A549 (cell line): ENCODE measurements at regions of chr15 and their contacts with region 1.

Region 1: GRCh38 chr15:59247364-59247763 is 40.7 kb downstream of the LDHAL6B start:
- DNase-seq: peak; percentile 73 to 86
- ATAC-seq: peak; percentile 75 to 88; a peak in 5 of 6 replicates
- H3K4me3 ChIP-seq: no peak overlapping the region
- H3K27ac ChIP-seq: peak overlapping the region; percentile 53 to 87
- H3K4me1 ChIP-seq: peaks cover 93% of the 10 kb centered on the region
- CTCF ChIP-seq: peak; percentile 79
- EP300 ChIP-seq: no peak
- POLR2A ChIP-seq: no peak
- RAD21 ChIP-seq: peak; percentile 79 to 81

Region 2: GRCh38 chr15:58839485-58839884 is 407.9 kb before region 1 on chr15:
- CTCF ChIA-PET with region 1: no interaction called
- POLR2A ChIA-PET with region 1: no interaction called
- DNase-seq: peak; percentile 31 to 33
- ATAC-seq: peak; percentile 59 to 87; a peak in 3 of 6 replicates
- H3K4me3 ChIP-seq: no peak overlapping the region
- H3K27ac ChIP-seq: no peak overlapping the region
- H3K4me1 ChIP-seq: no peaks in the 10 kb centered on the region
- CTCF ChIP-seq: peak; percentile 43
- EP300 ChIP-seq: no peak
- POLR2A ChIP-seq: no peak
- RAD21 ChIP-seq: peak; percentile 43 to 59; a peak in 4 of 5 replicates

Region 3: GRCh38 chr15:59237119-59237855 is 10.1 kb before region 1 on chr15:
- CTCF ChIA-PET with region 1: interaction called, 20 read pairs
- POLR2A ChIA-PET with region 1: no interaction called
- DNase-seq: no peak
- ATAC-seq: no peak
- H3K4me3 ChIP-seq: no peak overlapping the region
- H3K27ac ChIP-seq: peak overlapping the region; percentile 5 to 46; a peak in 3 of 6 replicates
- H3K4me1 ChIP-seq: peaks cover 55% of the 10 kb centered on the region
- CTCF ChIP-seq: no peak
- EP300 ChIP-seq: no peak
- POLR2A ChIP-seq: no peak
- RAD21 ChIP-seq: no peak

Region 4: GRCh38 chr15:59290295-59291212 is 43.2 kb after region 1 on chr15:
- CTCF ChIA-PET with region 1: interaction called, 37 read pairs
- POLR2A ChIA-PET with region 1: no interaction called
- DNase-seq: no peak
- ATAC-seq: no peak
- H3K4me3 ChIP-seq: no peak overlapping the region
- H3K27ac ChIP-seq: peak overlapping the region; percentile 93 to 95
- H3K4me1 ChIP-seq: peaks cover 89% of the 10 kb centered on the region
- CTCF ChIP-seq: no peak
- EP300 ChIP-seq: no peak
- POLR2A ChIP-seq: no peak
- RAD21 ChIP-seq: no peak

Region 5: GRCh38 chr15:59360305-59360704 is 112.9 kb after region 1 on chr15:
- CTCF ChIA-PET with region 1: interaction called, 15 read pairs
- POLR2A ChIA-PET with region 1: no interaction called
- DNase-seq: no peak
- ATAC-seq: peak; percentile 70 to 80; a peak in 5 of 6 replicates
- H3K4me3 ChIP-seq: no peak overlapping the region
- H3K27ac ChIP-seq: no peak overlapping the region
- H3K4me1 ChIP-seq: peaks cover 68% of the 10 kb centered on the region
- CTCF ChIP-seq: no peak
- EP300 ChIP-seq: no peak
- POLR2A ChIP-seq: no peak
- RAD21 ChIP-seq: no peak

Region 6: DNA sequence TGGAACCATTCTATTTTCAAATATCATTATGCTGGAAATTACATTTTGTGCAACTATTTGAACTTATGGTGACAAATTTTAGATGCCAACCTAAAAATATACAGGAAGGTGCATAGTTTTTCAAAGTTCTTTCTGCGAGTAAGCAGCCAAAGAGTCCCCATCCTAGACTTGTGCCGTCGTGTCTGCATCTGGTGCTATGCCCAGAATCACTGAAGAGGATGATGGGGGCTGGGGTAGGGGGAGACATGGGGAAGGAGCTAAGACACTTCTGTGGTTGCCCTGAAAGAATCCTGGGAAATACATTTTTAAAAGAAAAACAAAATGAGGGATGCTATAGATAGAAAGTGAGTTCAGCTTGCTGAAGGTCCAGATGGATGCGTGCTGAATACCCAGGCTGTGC is 169.5 kb after region 1 on chr15:
- CTCF ChIA-PET with region 1: interaction called, 13 read pairs
- POLR2A ChIA-PET with region 1: no interaction called
- DNase-seq: no peak
- ATAC-seq: no peak
- H3K4me3 ChIP-seq: no peak overlapping the region
- H3K27ac ChIP-seq: no peak overlapping the region
- H3K4me1 ChIP-seq: peaks cover 13% of the 10 kb centered on the region
- CTCF ChIP-seq: no peak
- EP300 ChIP-seq: no peak
- POLR2A ChIP-seq: no peak
- RAD21 ChIP-seq: no peak